ENCODE measurements at regions of chr7 and their contacts with region 1.

Region 1: DNA sequence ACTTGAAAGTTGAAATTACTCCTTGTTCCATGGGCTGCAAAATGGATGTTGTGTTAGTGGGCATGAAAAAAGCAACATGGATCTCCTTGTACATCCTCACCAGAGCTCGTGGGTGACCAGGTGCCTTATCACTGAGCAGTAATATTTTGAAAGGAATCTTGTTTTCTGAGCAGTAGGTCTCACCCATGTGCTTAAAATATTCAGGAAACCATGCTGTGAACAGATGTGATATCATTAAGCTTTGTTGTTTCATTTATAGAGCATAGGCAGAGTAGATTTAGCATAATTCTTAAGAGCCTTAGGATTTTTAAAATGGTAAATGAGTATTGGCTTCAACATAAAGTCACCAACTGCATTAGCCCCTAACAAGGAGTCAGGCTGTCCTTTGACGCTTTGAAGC is 316.6 kb downstream of the TYW1 start:
- DNase-seq: no peak
- ATAC-seq: no peak
- H3K4me3 ChIP-seq: no peak overlapping the region
- H3K27ac ChIP-seq: no peak overlapping the region
- H3K4me1 ChIP-seq: no peaks in the 10 kb centered on the region
- H3K27me3 ChIP-seq: no peaks in the 10 kb centered on the region
- CTCF ChIP-seq: no peak
- EP300 ChIP-seq: no peak
- POLR2A ChIP-seq: no peak
- RAD21 ChIP-seq: no peak

Region 2: GRCh38 chr7:66654123-66654732 is 659.0 kb before region 1 on chr7:
- CTCF ChIA-PET with region 1: no interaction called
- POLR2A ChIA-PET with region 1: no interaction called
- in situ Hi-C with region 1: no loop called
- intact Hi-C with region 1: no loop called
- DNase-seq: peak; percentile 97 to 100 (median 98)
- ATAC-seq: peak; percentile 94
- H3K4me3 ChIP-seq: peak overlapping the region; percentile 61
- H3K27ac ChIP-seq: peak overlapping the region; percentile 99
- H3K4me1 ChIP-seq: peaks cover 6 to 30% of the 10 kb centered on the region in 2 experiments; a peak in 4 of 5 replicates
- H3K27me3 ChIP-seq: no peaks in the 10 kb centered on the region
- CTCF ChIP-seq: peak in 2 of 3 experiments; percentile 28 to 38; a peak in 2 of 6 replicates
- EP300 ChIP-seq: peak; percentile 37; the same call in 1 of the 2 replicates
- POLR2A ChIP-seq: peak; percentile 97
- RAD21 ChIP-seq: no peak; a peak in 1 of 4 replicates

Region 3: GRCh38 chr7:67302113-67303039 is 10.8 kb before region 1 on chr7:
- CTCF ChIA-PET with region 1: no interaction called
- POLR2A ChIA-PET with region 1: interaction called, 16 read pairs
- in situ Hi-C with region 1: no loop called
- intact Hi-C with region 1: no loop called
- DNase-seq: peak; percentile 99 to 100 (median 100)
- ATAC-seq: peak; percentile 94
- H3K4me3 ChIP-seq: peak overlapping the region; percentile 67
- H3K27ac ChIP-seq: peak overlapping the region; percentile 94
- H3K4me1 ChIP-seq: peaks cover 0 to 15% of the 10 kb centered on the region in 2 experiments; a peak in 1 of 5 replicates
- H3K27me3 ChIP-seq: no peaks in the 10 kb centered on the region
- CTCF ChIP-seq: peak; percentile 29 to 50 (median 37); a peak in 4 of 6 replicates
- EP300 ChIP-seq: 0 out of 2 replicates have a peak, but pooled peaks have one; percentile 33
- POLR2A ChIP-seq: peak; percentile 99
- RAD21 ChIP-seq: peak in 1 of 2 experiments; percentile 21; a peak in 2 of 4 replicates

Region 4: DNA sequence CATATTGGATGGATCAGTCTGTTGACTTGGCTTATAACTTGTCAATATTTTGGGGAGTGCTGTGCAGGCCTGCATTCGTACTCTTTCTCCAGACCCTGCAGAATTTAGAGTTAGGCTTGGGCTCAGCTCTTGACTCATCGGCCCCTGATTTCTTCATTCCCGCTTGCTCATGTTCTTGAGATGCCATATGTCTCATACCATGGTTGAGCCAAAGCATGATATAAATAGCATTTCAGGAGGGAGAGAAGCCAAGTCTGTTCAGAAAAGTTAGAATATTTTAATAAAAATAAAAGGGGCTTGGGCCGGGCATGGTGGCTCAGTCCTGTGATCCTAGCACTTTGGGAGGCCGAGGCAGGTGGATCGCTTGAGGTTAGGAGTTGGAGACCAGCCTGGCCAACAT is 581.5 kb after region 1 on chr7:
- CTCF ChIA-PET with region 1: no interaction called
- POLR2A ChIA-PET with region 1: no interaction called
- in situ Hi-C with region 1: no loop called
- intact Hi-C with region 1: no loop called
- DNase-seq: no peak
- ATAC-seq: no peak
- H3K4me3 ChIP-seq: no peak overlapping the region
- H3K27ac ChIP-seq: no peak overlapping the region
- H3K4me1 ChIP-seq: no peaks in the 10 kb centered on the region
- H3K27me3 ChIP-seq: no peaks in the 10 kb centered on the region
- CTCF ChIP-seq: no peak
- EP300 ChIP-seq: no peak
- POLR2A ChIP-seq: no peak
- RAD21 ChIP-seq: no peak

Region 5: GRCh38 chr7:68269405-68269804 is 956.2 kb after region 1 on chr7:
- CTCF ChIA-PET with region 1: no interaction called
- POLR2A ChIA-PET with region 1: no interaction called
- in situ Hi-C with region 1: no loop called
- intact Hi-C with region 1: no loop called
- DNase-seq: no peak
- ATAC-seq: no peak
- H3K4me3 ChIP-seq: no peak overlapping the region
- H3K27ac ChIP-seq: no peak overlapping the region
- H3K4me1 ChIP-seq: no peaks in the 10 kb centered on the region
- H3K27me3 ChIP-seq: no peaks in the 10 kb centered on the region
- CTCF ChIP-seq: no peak
- EP300 ChIP-seq: no peak
- POLR2A ChIP-seq: no peak
- RAD21 ChIP-seq: no peak